ENCODE measurements at regions of chr3 and their contacts with region 1.

Region 1: DNA sequence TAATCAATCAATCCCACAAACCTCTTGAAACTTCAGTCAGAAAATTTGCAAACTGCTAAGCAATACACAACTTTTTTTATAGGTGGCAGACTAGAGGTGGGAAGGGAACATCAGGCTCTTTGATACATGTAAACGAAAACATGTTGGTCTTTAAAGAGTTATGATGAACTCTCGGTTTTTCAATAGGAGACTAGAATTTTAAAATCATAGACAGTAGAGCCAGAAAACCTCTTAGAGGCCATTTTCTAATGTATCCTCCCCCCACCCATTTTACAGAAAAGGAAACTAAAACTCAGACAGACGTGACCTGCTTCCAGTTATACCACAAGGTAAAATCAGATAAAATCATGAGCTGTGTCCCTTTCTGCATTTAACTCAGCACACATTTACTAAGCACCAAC is 179.1 kb upstream of the LPP start:
- DNase-seq: peak in 6 of 9 donors; percentile 8 to 42 (median 32)
- ATAC-seq: peak; percentile 67
- H3K4me3 ChIP-seq: peak overlapping the region; percentile 3
- H3K4me3 Mint-ChIP-seq: peak overlapping the region; percentile 41 to 85 (median 76)
- H3K27ac ChIP-seq: no peak overlapping the region
- H3K27ac Mint-ChIP-seq: peak overlapping the region; percentile 44 to 96 (median 80)
- H3K4me1 ChIP-seq: peaks cover 36 to 40% of the 10 kb centered on the region in 2 donors
- H3K4me1 Mint-ChIP-seq: peaks cover 31 to 71% (median 49%) of the 10 kb centered on the region in 7 donors
- H3K27me3 ChIP-seq: no peaks in the 10 kb centered on the region
- H3K27me3 Mint-ChIP-seq: no peaks in the 10 kb centered on the region

Region 2: DNA sequence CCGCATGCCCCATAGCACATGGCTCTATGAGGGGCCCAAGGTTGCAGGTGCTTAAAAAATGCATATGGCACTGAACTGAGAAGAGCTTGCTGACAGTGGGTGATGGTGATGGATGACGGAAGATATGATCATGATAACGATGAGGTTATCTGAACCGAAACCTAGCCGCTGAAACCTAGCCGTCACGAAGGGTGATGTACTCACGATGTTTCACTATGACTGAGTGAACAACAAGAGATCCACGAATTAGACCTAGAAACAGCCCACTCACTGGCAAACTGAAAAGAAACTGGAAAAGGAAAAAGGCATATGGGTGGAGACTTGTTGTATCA is 172.0 kb before region 1 on chr3:
- CTCF ChIA-PET with region 1: no interaction called
- POLR2A ChIA-PET with region 1: no interaction called
- intact Hi-C with region 1: loop called in 1 of 2 experiments (anchors 2 kb)
- DNase-seq: peak in 1 of 9 donors; percentile 66
- ATAC-seq: peak; percentile 56
- H3K4me3 ChIP-seq: no peak overlapping the region
- H3K4me3 Mint-ChIP-seq: peak overlapping the region in 6 of 10 donors; percentile 14 to 69 (median 34)
- H3K27ac ChIP-seq: no peak overlapping the region
- H3K27ac Mint-ChIP-seq: peak overlapping the region in 1 of 9 donors; percentile 90
- H3K4me1 ChIP-seq: peaks cover 22 to 47% of the 10 kb centered on the region in 2 donors
- H3K4me1 Mint-ChIP-seq: peaks cover 23 to 93% (median 44%) of the 10 kb centered on the region in 7 donors
- H3K27me3 ChIP-seq: no peaks in the 10 kb centered on the region
- H3K27me3 Mint-ChIP-seq: no peaks in the 10 kb centered on the region

Region 3: GRCh38 chr3:188000361-188000861 is 25.5 kb after region 1 on chr3:
- CTCF ChIA-PET with region 1: interaction called, 3 read pairs
- POLR2A ChIA-PET with region 1: no interaction called
- intact Hi-C with region 1: loop called (anchors 1 to 2 kb)
- DNase-seq: no peak
- ATAC-seq: no peak
- H3K4me3 ChIP-seq: peak overlapping the region; percentile 13
- H3K4me3 Mint-ChIP-seq: peak overlapping the region; percentile 42 to 83 (median 77)
- H3K27ac ChIP-seq: no peak overlapping the region
- H3K27ac Mint-ChIP-seq: peak overlapping the region; percentile 27 to 94 (median 85)
- H3K4me1 ChIP-seq: peaks cover 26 to 37% of the 10 kb centered on the region in 2 donors
- H3K4me1 Mint-ChIP-seq: peaks cover 41 to 75% (median 64%) of the 10 kb centered on the region in 7 donors
- H3K27me3 ChIP-seq: no peaks in the 10 kb centered on the region
- H3K27me3 Mint-ChIP-seq: no peaks in the 10 kb centered on the region

Region 4: GRCh38 chr3:188170461-188171459 is 195.9 kb after region 1 on chr3:
- CTCF ChIA-PET with region 1: no interaction called
- POLR2A ChIA-PET with region 1: no interaction called
- intact Hi-C with region 1: loop called in 1 of 2 experiments (anchors 5 kb)
- DNase-seq: peak in 6 of 9 donors; percentile 25 to 61 (median 44)
- ATAC-seq: peak; percentile 87
- H3K4me3 ChIP-seq: no peak overlapping the region
- H3K4me3 Mint-ChIP-seq: peak overlapping the region in 9 of 10 donors; percentile 12 to 50 (median 33)
- H3K27ac ChIP-seq: no peak overlapping the region
- H3K27ac Mint-ChIP-seq: peak overlapping the region; percentile 14 to 85 (median 56)
- H3K4me1 ChIP-seq: peaks cover 11 to 13% of the 10 kb centered on the region in 2 donors
- H3K4me1 Mint-ChIP-seq: peaks cover 25 to 50% (median 39%) of the 10 kb centered on the region in 7 donors
- H3K27me3 ChIP-seq: no peaks in the 10 kb centered on the region
- H3K27me3 Mint-ChIP-seq: no peaks in the 10 kb centered on the region

Region 5: GRCh38 chr3:188954590-188955208 is 979.8 kb after region 1 on chr3:
- CTCF ChIA-PET with region 1: interaction called, 5 read pairs
- POLR2A ChIA-PET with region 1: no interaction called
- intact Hi-C with region 1: loop called (anchors 5 to 10 kb)
- DNase-seq: peak; percentile 35 to 80 (median 63)
- ATAC-seq: peak; percentile 83
- H3K4me3 ChIP-seq: no peak overlapping the region
- H3K4me3 Mint-ChIP-seq: no peak overlapping the region
- H3K27ac ChIP-seq: no peak overlapping the region
- H3K27ac Mint-ChIP-seq: no peak overlapping the region
- H3K4me1 ChIP-seq: no peaks in the 10 kb centered on the region
- H3K4me1 Mint-ChIP-seq: peaks cover 0 to 30% (median 0%) of the 10 kb centered on the region in 7 donors
- H3K27me3 ChIP-seq: no peaks in the 10 kb centered on the region
- H3K27me3 Mint-ChIP-seq: peaks cover 0 to 5% (median 0%) of the 10 kb centered on the region in 5 donors